ENCODE measurements at regions of chr12 and their contacts with region 1.

Region 1: DNA sequence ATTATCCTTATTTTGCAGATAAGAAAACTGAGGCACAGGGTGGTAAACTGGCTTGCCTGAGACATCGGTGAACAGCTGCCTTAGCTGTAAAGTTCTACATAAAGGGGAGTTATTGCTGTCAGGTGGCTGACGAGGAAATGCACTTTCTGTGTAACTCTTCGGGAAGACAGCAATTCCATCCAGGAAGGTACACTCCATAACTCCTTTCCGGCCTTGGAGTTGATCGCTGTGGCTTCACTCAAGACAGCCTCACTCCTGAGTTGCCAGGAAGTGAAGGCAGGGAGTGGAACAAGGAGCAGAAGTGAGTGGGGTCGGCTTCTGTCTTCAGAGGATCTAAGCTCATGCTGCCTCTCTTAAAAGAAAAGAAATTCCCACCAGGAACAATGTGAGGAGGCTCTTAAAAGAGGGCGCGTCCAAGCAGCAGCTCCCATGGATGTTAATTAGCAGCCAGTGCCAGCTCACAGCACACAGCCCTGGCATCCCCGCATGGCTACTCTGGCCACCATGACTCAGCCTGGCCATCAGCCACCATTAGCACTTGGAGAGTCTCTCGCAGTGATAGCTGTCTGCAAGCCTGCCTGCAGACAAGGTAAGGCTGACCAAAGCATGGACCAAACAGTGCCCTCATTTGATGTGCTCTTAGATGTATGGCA is 60.3 kb downstream of the NUAK1 start:
- DNase-seq: peak; percentile 82
- ATAC-seq: peak; percentile 81

Region 2: GRCh38 chr12:105960319-105961083 is 118.0 kb before region 1 on chr12:
- intact Hi-C with region 1: loop called (anchors 10 kb)
- DNase-seq: no peak
- ATAC-seq: peak; percentile 40